ENCODE measurements at regions of chr2 and their contacts with region 1.

Region 1: DNA sequence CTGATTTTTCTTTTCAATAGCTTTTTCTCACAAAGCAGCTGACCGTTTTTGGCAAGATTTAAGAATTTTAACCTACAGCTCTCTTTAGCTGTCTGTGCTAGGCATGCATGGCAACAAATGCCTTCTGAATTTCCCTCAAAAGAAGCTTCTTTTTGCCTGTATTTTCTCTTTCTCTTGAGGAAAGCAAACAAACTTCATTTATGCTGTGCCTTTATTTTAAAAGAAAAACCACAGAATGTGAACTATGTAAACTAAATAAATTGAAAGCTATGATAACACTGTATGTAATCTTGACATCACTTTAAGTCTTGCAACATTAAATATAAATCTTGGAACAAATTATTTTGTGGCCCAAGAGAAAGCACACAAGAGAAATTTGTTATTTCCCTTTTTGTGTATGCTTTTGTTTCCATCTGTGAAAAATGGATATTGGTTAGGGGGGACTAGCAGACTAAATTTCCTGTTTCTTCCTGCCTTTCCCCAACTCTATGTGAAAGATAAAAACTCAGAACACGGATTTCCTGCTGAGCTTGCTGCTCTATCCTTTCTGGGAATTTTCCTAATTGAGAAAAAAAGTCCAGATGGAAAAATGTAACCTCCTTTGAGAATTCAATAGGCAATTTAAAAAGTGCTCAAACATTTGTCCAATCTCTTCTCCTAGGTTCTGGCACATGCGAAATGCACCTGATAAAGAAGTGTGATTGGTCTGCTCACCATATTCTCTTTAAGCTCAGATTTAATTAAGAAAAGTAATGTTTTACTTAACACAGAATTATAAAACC is 20.9 kb upstream of the TFPI start:
- DNase-seq: no peak
- ATAC-seq: no peak
- H3K4me3 ChIP-seq: no peak overlapping the region
- H3K27ac ChIP-seq: no peak overlapping the region
- H3K4me1 ChIP-seq: no peaks in the 10 kb centered on the region
- H3K27me3 ChIP-seq: no peaks in the 10 kb centered on the region
- CTCF ChIP-seq: no peak

Region 2: DNA sequence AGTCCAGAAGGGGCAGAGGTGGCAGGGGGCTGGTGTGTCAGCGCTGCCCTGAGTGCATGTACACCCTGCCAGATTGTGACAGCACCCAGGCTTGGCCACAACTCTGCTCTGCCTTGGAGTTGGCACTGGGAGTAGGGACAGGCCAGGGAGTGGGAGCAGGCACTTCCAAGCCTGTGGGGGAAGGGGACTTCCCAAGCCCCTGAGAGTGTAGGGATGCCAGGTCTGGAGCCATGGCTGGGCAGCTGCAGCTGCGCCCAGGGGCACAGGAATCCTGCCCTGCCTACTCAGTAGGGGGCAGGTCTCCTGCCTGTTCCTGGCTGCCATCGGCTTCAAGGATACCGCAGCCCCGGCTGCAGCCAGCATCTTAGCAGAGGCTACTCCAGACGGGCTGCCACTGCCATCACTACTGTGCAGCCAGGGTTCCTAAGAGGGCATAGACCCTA is 236.5 kb before region 1 on chr2:
- intact Hi-C with region 1: no loop called
- DNase-seq: peak in 2 of 6 donors; percentile 10 to 42
- ATAC-seq: no peak
- H3K4me3 ChIP-seq: no peak overlapping the region
- H3K27ac ChIP-seq: no peak overlapping the region
- H3K4me1 ChIP-seq: no peaks in the 10 kb centered on the region
- H3K27me3 ChIP-seq: no peaks in the 10 kb centered on the region
- CTCF ChIP-seq: no peak

Region 3: DNA sequence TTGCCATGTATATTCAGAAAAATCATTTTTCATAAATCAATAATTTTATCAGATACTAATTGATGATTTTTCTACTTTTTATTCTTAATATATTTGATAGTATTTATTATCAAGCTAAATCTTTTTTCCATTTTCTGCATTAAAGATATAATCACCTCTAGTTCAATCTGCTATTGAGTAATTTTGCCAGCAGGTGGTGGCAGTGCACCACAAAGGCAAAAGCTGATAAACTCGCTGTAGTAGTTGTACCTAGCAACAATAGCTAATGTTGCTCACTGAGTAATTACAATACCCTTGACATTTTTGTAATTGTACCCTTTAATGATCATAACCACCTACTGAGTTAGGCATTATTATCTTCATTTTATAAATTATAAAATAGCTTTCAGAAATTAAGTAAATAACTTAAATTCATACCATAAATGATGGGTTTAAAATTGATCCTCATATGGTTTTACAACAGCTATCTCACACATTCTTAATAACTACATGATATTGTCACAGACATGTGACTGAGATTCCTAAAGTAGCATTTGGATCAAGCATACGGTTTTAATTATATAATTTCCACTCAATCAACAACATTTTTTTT is 75.1 kb before region 1 on chr2:
- intact Hi-C with region 1: loop called (anchors 5 to 10 kb)
- DNase-seq: peak in 4 of 6 donors; percentile 25 to 65 (median 38)
- ATAC-seq: peak; percentile 87 to 96 (median 96)
- H3K4me3 ChIP-seq: no peak overlapping the region
- H3K27ac ChIP-seq: no peak overlapping the region
- H3K4me1 ChIP-seq: peaks cover 0 to 11% (median 6%) of the 10 kb centered on the region in 3 donors
- H3K27me3 ChIP-seq: no peaks in the 10 kb centered on the region
- CTCF ChIP-seq: peak; percentile 26 to 79 (median 57)

Region 4: DNA sequence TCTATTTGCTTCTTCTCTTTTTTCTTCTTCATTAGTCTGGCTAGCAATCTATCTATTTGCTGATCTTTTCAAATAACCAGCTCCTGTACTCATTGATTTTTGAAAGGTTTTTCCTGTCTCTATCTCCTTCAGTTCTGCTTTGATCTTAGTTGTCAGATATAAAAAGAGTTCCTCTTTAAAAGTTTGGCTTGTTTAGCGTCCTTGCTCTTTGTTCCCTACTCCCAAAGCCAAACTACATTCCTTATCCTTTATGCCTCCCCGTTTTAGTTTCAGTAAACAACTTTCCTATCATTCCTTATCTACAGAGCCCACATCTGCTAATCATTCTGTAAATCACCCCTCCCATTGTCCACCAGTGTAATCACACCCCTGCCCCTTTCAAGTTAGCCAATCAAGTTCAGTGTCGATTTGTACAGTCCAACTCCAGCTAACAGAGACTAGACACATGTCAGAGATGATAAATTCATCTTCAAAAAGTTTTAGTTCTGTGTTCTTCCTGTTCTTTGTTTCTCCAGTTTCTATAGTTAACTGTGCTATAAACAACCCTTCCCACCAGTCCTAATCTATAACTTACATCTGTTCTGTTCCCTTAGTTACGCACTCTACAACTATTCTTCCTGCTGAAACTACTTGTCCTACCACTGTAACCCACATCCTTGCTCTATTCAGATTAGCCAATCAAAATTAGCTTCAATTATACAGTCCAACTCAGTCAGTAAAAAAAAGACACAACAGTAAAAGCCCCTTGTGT is 65.3 kb before region 1 on chr2:
- intact Hi-C with region 1: loop called (anchors 5 to 10 kb)
- DNase-seq: no peak
- ATAC-seq: no peak
- H3K4me3 ChIP-seq: no peak overlapping the region
- H3K27ac ChIP-seq: no peak overlapping the region
- H3K4me1 ChIP-seq: no peaks in the 10 kb centered on the region
- H3K27me3 ChIP-seq: no peaks in the 10 kb centered on the region
- CTCF ChIP-seq: no peak

Measured in pancreas (tissue), 10 donors.